ENCODE measurements at regions of chr17 and their contacts with region 1.

Region 1: GRCh38 chr17:40621578-40621977 is 26.0 kb downstream of the SMARCE1 start:
- DNase-seq: no peak
- H3K4me3 ChIP-seq: no peak overlapping the region
- H3K27ac ChIP-seq: peak overlapping the region; percentile 37 to 48 (median 38)
- H3K4me1 ChIP-seq: peaks cover 3 to 24% (median 11%) of the 10 kb centered on the region in 4 donors
- H3K27me3 ChIP-seq: peaks cover 0 to 40% (median 6%) of the 10 kb centered on the region in 4 donors
- CTCF ChIP-seq: no peak
- EP300 ChIP-seq: no peak
- POLR2A ChIP-seq: no peak

Region 2: DNA sequence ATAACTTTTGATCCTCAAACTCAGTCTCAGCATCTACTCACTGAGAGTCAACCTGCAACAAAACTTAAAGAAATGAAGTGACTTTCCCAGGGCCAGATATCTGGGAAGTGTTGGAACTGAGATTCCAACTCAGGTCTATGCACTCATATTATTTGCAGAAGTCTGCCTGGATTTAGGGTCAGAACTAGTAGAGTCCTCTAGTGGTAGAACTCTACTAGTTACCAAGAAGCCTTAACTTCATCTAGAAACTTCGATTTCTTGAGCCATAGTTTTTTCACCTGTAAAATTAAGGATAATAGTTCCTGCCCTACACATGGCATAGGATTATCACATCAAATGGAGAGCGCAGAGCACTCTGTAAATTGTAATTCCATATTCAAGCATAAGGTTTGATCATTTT is 105.3 kb after region 1 on chr17:
- intact Hi-C with region 1: loop called (anchors 2 kb)
- DNase-seq: no peak
- H3K4me3 ChIP-seq: no peak overlapping the region
- H3K27ac ChIP-seq: no peak overlapping the region
- H3K4me1 ChIP-seq: no peaks in the 10 kb centered on the region
- H3K27me3 ChIP-seq: peaks cover 0 to 14% (median 0%) of the 10 kb centered on the region in 4 donors
- CTCF ChIP-seq: peak; percentile 28 to 48 (median 38)
- EP300 ChIP-seq: no peak
- POLR2A ChIP-seq: no peak

Measured in esophagus muscularis mucosa (tissue), 4 donors.